Astrocyte of the cerebellum (primary cell): ENCODE measurements at regions of chr9 and their contacts with region 1.

Region 1: DNA sequence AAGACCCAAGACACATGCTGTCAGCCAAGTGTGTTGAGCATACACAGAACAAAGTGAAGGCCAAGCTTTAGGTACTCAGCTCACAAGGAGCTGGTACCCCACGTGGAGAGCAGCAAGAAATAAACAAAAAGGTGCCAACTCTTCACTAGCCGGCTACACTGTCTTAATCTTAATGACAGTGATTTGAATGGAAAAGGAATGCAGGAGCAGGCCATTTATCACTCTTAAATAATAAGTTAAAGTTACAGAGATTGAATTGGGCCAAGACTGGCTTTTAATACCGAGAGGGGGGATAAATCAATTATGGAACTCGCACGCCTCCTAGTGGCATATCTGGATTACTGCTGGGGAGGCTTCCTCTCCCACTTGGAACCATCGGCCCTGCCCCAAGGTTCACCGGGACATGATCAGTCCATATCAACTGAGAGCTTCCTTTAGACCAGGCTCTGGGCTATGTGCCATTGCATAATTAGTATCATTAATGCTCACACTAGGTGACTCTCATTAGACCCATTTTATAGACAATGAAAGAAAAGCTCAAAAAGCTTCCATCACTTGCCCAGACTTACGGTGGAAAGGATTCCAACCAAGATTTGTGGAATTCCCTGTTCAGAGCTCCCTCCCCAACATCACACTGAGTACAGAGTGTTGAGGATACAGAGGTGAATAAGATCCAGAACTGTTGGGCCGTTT is 94.0 kb downstream of the ACTL7B start:
- DNase-seq: peak; percentile 32
- H3K4me3 ChIP-seq: no peak overlapping the region
- CTCF ChIP-seq: peak; percentile 89

Region 2: GRCh38 chr9:107340920-107341632 is 1420.7 kb before region 1 on chr9:
- in situ Hi-C with region 1: loop called (anchors 10 kb)
- DNase-seq: peak; percentile 23
- H3K4me3 ChIP-seq: no peak overlapping the region
- CTCF ChIP-seq: peak; percentile 87

Region 3: GRCh38 chr9:107489687-107490605 is 1271.9 kb before region 1 on chr9 and contains the start of gene KLF4:
- in situ Hi-C with region 1: loop called (anchors 25 kb)
- DNase-seq: peak; percentile 82
- H3K4me3 ChIP-seq: peak within 1 kb of the TSS; percentile 55
- CTCF ChIP-seq: no peak

Region 4: GRCh38 chr9:108579757-108580439 is 181.9 kb before region 1 on chr9:
- in situ Hi-C with region 1: loop called (anchors 25 kb)
- DNase-seq: no peak
- H3K4me3 ChIP-seq: no peak overlapping the region
- CTCF ChIP-seq: no peak

Region 5: DNA sequence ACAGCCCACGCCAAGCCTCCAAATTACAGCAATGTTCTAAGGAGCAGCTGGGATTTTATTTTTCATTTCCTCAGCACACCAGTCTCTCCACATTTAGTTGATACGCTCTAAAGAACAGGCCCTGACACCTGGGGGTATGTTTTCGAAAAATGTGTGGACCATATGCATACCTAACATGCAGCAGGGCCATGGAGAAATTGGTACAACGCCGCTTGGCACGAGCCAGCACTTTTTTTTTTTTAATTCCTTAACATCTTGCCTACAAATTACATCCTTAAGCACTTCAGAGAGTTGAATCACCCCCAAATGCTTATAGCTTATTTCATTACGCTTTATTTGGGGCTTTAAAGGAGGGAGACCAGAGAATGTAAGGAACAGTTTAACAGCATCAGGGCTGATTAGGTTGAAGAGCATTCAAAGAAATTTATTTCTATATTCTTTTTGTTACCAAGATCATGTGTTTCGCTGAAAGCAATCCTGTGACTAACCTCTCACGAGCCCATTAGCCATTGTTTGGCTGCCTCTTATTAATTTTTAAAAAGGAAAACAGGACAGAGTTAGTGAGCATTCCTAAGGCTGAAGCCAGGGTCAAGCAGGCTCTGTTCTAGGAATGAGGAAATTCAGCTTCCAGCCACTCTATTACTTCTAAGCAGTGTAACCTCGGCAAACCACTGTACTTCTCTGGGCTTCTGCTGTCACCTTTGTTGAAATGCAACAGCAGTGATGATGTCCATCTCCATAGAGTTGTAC is 79.8 kb before region 1 on chr9:
- in situ Hi-C with region 1: no loop called
- DNase-seq: no peak
- H3K4me3 ChIP-seq: no peak overlapping the region
- CTCF ChIP-seq: no peak